Activated CD4-positive, alpha-beta memory T cell treated with anti-CD3 and anti-CD28 coated beads for 36 hours (primary cell): ENCODE measurements at regions of chr5 and their contacts with region 1.

Region 1: DNA sequence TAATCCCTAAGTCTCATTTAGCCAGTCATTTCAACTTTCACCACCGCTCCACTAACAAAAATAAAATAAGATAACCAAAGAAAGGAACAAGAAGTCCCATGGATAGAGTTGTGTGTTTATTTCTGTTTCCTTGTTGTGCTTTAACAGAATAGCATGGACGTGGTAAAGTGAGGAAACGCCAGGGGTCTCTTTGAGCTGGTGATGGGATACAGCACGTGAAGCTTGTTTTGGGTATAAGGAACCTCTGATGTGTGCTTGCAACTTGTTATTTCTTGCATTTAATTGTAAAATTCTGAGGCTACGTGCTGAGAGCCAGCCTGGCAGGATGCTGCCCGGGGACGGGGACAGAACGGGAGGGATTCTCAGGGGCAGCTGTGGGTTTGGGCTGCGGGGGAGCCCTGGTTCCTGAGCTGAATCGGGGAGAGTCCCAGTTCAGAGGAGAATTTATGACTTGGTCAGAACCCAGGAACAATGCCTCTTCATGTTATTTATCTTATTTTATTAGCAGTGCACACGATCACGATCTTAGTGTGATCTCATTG is 63.4 kb downstream of the ANKRD33B start:
- DNase-seq: peak; percentile 28
- H3K4me3 Mint-ChIP-seq: peak overlapping the region; percentile 69
- H3K27ac Mint-ChIP-seq: peak overlapping the region; percentile 48
- H3K4me1 Mint-ChIP-seq: peaks cover 39% of the 10 kb centered on the region
- H3K27me3 Mint-ChIP-seq: peaks cover 6% of the 10 kb centered on the region

Region 2: GRCh38 chr5:10283927-10284635 is 343.1 kb before region 1 on chr5:
- CTCF ChIA-PET with region 1: interaction called, 22 read pairs
- POLR2A ChIA-PET with region 1: no interaction called
- intact Hi-C with region 1: loop called (anchors 2 kb)
- DNase-seq: peak; percentile 87
- H3K4me3 Mint-ChIP-seq: no peak overlapping the region
- H3K27ac Mint-ChIP-seq: peak overlapping the region; percentile 13
- H3K4me1 Mint-ChIP-seq: peaks cover 18% of the 10 kb centered on the region
- H3K27me3 Mint-ChIP-seq: no peaks in the 10 kb centered on the region

Region 3: DNA sequence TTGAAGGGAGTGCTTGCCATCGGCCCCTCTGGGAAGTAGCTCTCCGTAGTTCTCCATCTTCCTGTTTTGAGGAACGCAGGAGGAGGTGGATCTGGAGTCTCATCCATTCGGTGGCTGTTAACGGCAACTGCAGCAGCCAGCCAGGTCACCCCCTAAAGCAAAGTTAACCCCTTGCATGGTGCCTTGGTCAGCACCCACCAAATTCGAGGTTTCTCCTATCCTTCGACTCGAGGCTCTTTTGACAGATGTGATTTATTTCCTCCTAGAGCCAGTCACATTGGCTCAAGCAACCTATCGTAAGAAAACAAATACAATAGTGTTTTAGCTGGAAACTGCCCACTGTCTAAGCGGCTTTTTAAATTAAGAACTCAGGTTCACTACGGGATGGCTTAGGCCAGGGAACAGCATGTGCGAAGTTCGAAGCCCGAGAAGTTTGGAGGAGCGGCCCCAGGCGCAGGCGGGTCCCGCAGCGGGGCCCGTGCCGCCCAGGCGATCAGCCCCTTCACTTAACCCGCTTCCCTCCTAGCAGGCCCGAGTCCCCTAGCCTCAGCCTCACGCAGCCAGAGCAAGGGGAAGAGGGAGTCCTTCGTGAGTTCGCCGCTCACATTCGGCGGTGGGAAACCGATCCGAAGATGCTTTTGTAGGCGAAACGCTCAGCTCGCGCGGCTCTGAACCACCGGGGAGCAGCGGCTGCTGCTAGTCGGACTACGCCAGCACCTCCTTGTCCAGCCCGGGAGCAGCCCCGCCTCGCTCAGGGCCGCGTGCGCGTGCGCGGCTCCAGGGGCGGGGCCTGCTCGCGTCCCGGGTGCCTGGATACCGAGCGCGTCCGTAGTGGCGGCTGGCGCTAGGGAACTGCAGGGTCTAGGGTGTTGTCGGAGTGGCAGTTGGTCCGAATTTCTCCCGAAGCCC is 185.9 kb before region 1 on chr5 and contains the start of gene ROPN1L:
- CTCF ChIA-PET with region 1: interaction called, 154 read pairs
- POLR2A ChIA-PET with region 1: no interaction called
- intact Hi-C with region 1: loop called (anchors 5 kb)
- DNase-seq: peak; percentile 86
- H3K4me3 Mint-ChIP-seq: peak within 1 kb of the TSS; percentile 78
- H3K27ac Mint-ChIP-seq: no peak within 1 kb of the TSS
- H3K4me1 Mint-ChIP-seq: peaks cover 33% of the 10 kb centered on the region
- H3K27me3 Mint-ChIP-seq: no peaks in the 10 kb centered on the region
- total RNA-seq, gene ROPN1L: not detected

Region 4: DNA sequence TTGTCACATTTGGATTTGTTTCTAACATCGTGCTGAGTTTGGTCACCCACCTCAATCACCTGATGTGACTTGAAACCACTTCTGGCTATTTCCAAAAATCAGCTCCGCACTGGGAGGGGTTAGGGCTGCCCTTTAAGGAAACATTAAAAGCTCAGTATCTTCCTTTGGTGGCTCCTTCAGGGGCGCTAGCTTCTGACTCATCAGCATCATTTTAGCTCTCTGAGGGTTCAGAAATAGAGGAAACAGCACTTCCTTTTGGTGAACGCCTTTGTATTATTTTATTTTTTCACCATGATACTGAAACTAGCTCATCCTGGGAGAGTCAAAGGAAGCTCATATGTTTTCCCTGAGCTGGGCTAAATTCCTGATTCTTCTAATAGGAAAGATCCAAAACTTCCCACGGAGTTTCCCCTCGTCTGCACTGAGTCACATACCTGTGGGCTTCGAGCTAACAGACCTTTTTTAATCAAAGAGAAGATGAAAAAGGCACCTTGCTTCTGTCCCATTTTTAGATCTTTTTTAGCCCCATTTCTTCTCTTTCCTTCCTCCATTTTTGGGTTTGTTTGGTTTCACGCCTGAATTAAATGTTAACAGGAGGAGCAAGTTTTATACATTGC is 137.3 kb before region 1 on chr5:
- CTCF ChIA-PET with region 1: interaction called, 10 read pairs
- POLR2A ChIA-PET with region 1: no interaction called
- intact Hi-C with region 1: no loop called
- DNase-seq: peak; percentile 19
- H3K4me3 Mint-ChIP-seq: no peak overlapping the region
- H3K27ac Mint-ChIP-seq: no peak overlapping the region
- H3K4me1 Mint-ChIP-seq: peaks cover 16% of the 10 kb centered on the region
- H3K27me3 Mint-ChIP-seq: no peaks in the 10 kb centered on the region

Region 5: DNA sequence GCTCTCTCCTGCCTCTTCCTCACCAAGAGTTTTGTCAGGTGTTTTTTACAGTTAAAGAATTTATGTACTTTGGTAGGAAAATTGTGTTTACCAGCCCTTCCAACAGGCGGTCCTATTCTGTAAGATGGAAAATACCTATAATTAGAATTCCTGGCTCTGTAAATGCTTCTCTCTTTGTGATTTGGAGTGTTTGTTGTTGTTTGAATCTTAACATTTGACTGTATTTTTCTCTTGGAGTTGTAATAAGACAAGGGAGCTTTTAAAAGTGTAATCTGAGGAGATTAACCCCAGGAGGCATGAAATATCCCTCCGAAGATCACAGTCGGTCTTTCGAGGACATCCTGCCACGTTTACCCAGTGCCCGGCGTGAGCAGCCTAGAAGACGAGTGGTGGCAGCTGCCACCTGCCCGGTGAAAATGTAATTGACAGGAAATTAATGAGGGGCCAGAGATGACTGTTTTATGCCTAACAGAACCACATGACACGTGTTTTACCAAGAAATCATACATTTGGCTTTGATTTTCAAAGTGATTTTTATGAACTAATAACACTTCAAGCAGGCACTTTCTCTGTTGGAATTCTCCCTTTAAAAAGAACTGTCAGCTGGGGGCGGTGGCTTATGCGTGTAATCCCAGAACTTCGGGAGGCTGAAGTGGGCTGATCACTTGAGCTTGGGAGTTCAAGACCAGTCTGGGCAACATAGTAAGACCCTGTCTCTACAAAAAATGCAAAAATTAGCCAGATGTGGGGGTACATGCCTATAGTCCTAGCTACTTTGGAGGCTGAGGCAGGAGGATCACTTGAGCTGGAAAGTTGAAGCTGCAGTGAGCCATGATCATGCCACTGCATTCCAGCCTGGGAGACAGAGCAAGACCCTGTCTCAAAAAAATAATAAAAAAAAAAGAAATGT is 43.3 kb before region 1 on chr5:
- CTCF ChIA-PET with region 1: interaction called, 12 read pairs
- POLR2A ChIA-PET with region 1: no interaction called
- intact Hi-C with region 1: loop called (anchors 1 kb)
- DNase-seq: no peak
- H3K4me3 Mint-ChIP-seq: no peak overlapping the region
- H3K27ac Mint-ChIP-seq: no peak overlapping the region
- H3K4me1 Mint-ChIP-seq: peaks cover 66% of the 10 kb centered on the region
- H3K27me3 Mint-ChIP-seq: peaks cover 9% of the 10 kb centered on the region

Region 6: GRCh38 chr5:10601246-10602030 is 25.8 kb before region 1 on chr5:
- CTCF ChIA-PET with region 1: interaction called, 24 read pairs
- POLR2A ChIA-PET with region 1: interaction called, 3 read pairs
- intact Hi-C with region 1: no loop called
- DNase-seq: peak; percentile 25
- H3K4me3 Mint-ChIP-seq: no peak overlapping the region
- H3K27ac Mint-ChIP-seq: peak overlapping the region; percentile 13
- H3K4me1 Mint-ChIP-seq: peaks cover 33% of the 10 kb centered on the region
- H3K27me3 Mint-ChIP-seq: peaks cover 2% of the 10 kb centered on the region

Region 7: GRCh38 chr5:10663489-10664179 is 36.4 kb after region 1 on chr5:
- CTCF ChIA-PET with region 1: no interaction called
- POLR2A ChIA-PET with region 1: no interaction called
- intact Hi-C with region 1: no loop called
- DNase-seq: no peak
- H3K4me3 Mint-ChIP-seq: no peak overlapping the region
- H3K27ac Mint-ChIP-seq: no peak overlapping the region
- H3K4me1 Mint-ChIP-seq: no peaks in the 10 kb centered on the region
- H3K27me3 Mint-ChIP-seq: no peaks in the 10 kb centered on the region

Region 8: DNA sequence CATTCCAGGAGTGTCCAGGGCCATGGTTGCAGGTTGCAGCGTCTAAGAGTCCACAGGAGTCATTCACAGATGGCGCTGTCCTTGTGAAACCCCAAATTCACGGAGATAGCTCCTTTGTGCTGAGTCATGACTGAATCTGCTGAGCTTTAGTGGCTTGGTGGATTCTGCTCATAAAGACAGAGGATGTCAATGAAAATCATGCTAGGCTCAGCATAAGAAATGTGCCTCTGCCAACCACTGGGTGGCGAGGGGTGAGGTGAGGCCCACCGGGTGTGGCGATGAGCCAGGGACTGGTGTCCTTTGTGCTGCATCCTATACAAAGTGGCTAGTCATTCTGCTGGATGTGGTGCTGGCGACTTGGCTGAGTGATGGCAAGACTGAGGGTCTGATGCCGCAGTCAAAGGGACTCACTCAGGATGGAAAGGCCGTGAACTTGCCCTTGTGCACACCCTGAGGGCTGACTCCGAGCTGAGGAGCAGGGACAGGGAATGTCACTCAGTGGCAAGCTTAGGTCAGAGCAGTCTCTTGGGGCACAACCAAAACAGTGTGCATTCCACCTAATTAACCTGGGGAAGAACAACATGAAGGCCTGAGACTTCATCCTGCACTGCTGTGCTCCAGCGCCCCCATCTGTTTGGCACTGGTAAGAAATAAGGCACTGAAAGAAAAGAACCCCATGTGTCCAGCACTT is 62.3 kb after region 1 on chr5:
- CTCF ChIA-PET with region 1: interaction called, 16 read pairs
- POLR2A ChIA-PET with region 1: interaction called, 3 read pairs
- intact Hi-C with region 1: loop called (anchors 1 kb)
- DNase-seq: peak; percentile 64
- H3K4me3 Mint-ChIP-seq: no peak overlapping the region
- H3K27ac Mint-ChIP-seq: no peak overlapping the region
- H3K4me1 Mint-ChIP-seq: peaks cover 21% of the 10 kb centered on the region
- H3K27me3 Mint-ChIP-seq: no peaks in the 10 kb centered on the region

Region 9: DNA sequence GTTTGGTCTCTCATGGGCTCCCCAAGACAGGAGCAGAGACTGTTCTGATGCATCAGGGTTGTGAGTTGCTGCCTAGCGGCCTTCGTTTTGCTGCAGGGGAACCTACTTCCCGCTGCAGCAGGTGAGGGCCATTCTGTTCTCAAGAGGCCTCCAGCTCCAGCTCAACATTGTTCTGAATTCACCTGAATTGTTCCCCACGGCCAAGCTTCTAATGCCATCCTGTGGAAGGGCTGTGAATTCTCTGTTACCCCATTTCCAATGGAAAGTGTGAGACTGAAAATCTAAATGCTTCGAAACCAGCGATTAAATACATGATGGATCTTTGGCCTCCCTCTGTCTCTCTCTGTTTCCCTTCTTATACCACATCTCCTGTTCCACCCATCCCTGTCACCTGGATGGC is 482.9 kb after region 1 on chr5:
- CTCF ChIA-PET with region 1: no interaction called
- POLR2A ChIA-PET with region 1: no interaction called
- intact Hi-C with region 1: no loop called
- DNase-seq: no peak
- H3K4me3 Mint-ChIP-seq: no peak overlapping the region
- H3K27ac Mint-ChIP-seq: no peak overlapping the region
- H3K4me1 Mint-ChIP-seq: no peaks in the 10 kb centered on the region
- H3K27me3 Mint-ChIP-seq: no peaks in the 10 kb centered on the region